Panc1 (cell line): ENCODE measurements at regions of chr12 and their contacts with region 1.

Region 1: GRCh38 chr12:31603546-31604009 is 12.6 kb upstream of the DENND5B start:
- DNase-seq: no peak
- ATAC-seq: no peak
- H3K4me3 ChIP-seq: no peak overlapping the region
- H3K27ac ChIP-seq: no peak overlapping the region
- H3K4me1 ChIP-seq: no peaks in the 10 kb centered on the region
- H3K27me3 ChIP-seq: no peaks in the 10 kb centered on the region
- CTCF ChIP-seq: no peak

Region 2: GRCh38 chr12:32170437-32170998 is 566.9 kb after region 1 on chr12:
- CTCF ChIA-PET with region 1: no interaction called
- POLR2A ChIA-PET with region 1: interaction called, 10 read pairs
- in situ Hi-C with region 1: no loop called
- intact Hi-C with region 1: no loop called
- DNase-seq: no peak
- ATAC-seq: no peak
- H3K4me3 ChIP-seq: no peak overlapping the region
- H3K27ac ChIP-seq: no peak overlapping the region
- H3K4me1 ChIP-seq: no peaks in the 10 kb centered on the region
- H3K27me3 ChIP-seq: no peaks in the 10 kb centered on the region
- CTCF ChIP-seq: no peak